Prostate gland (tissue), 2 donors: ENCODE measurements at regions of chr12 and their contacts with region 1.

Region 1: GRCh38 chr12:108618079-108618952 is 15.4 kb downstream of the SELPLG start:
- DNase-seq: peak; percentile 57
- H3K4me3 ChIP-seq: no peak overlapping the region
- H3K27ac ChIP-seq: no peak overlapping the region
- H3K4me1 ChIP-seq: no peaks in the 10 kb centered on the region
- H3K27me3 ChIP-seq: no peaks in the 10 kb centered on the region
- CTCF ChIP-seq: peak; percentile 90 to 97 (median 91)
- POLR2A ChIP-seq: no peak

Region 2: DNA sequence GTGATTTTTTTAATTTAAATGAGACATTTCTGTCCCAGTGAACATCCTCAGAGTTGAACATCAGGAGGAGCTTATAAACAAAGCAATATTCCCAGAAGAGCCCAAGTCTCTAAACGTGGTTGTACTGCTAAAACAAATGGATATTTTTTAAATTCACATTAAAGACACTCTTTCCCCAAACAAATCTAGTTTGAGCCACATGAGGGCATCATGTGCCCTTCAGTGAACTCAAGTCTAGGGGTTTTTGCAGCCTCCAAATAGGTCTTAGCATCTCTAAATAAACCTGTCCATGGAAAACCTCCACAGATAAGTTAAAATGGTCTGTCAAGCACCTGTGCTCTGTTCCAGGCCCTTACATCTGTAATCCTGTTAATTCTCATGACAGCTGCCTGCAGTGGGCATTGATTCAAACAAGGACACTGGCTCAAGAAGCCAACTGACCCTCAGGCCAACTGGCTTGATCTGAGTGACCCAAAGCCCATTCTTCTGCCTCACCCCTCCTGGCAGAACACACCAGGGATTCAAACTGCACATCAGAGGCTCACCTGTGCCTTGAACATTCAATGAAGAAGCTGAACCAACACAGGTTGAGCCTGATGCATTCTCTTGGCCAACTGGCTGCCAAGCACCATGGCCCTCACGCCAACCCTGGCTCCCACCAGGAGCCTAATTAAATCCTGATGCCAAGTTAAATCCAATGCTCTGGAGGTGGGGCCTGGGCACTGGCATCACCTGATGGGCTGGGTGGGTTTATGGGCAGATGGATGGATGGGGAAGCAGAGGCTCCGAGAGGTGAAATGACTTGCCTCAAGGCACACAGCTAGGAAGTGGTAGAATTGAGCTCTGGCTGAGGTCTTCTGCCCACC is 47.3 kb before region 1 on chr12:
- intact Hi-C with region 1: loop called (anchors 2 kb)
- DNase-seq: no peak
- H3K4me3 ChIP-seq: no peak overlapping the region
- H3K27ac ChIP-seq: no peak overlapping the region
- H3K4me1 ChIP-seq: no peaks in the 10 kb centered on the region
- H3K27me3 ChIP-seq: no peaks in the 10 kb centered on the region
- CTCF ChIP-seq: peak in 2 of 4 experiments; percentile 24 to 35
- POLR2A ChIP-seq: no peak

Region 3: DNA sequence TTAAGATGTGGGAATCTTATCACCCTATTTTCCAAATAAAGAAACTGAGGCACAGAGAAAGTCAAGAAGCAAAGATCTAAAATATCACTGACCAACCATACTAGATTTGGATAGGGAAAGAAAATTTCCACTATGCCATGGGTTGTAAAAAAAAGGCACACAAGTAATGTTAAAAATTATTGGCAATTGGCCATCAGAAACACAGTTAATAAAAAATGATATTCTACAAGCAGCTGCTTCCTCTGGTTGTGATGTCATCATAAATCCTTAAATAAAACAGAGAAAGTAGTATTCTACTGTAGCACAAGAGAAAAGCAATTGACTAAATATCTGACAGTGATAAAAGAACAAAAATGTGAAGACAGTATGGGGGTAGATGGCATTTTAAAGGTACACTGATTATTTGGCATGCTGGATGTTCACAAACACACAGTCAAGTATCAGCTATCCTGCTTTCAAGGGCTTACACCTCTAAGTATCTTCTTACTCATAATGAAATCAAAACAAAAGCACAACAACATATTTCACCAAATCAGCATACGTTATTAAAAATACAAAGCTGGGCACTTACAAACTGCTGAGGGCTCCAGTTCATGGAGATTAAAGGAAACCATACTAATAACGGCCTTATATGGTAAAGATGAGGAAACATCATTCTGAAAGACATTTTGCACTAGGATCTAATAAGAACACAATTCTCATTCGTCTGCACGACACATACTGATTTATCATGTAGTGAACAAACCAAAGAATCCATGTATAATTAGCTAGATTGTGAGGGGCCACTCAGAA is 67.3 kb after region 1 on chr12:
- intact Hi-C with region 1: no loop called
- DNase-seq: no peak
- H3K4me3 ChIP-seq: no peak overlapping the region
- H3K27ac ChIP-seq: peak overlapping the region; percentile 14 to 38
- H3K4me1 ChIP-seq: no peaks in the 10 kb centered on the region
- H3K27me3 ChIP-seq: no peaks in the 10 kb centered on the region
- CTCF ChIP-seq: no peak
- POLR2A ChIP-seq: no peak

Region 4: GRCh38 chr12:108731105-108731865 is 113.0 kb after region 1 on chr12 and contains the start of gene CORO1C:
- intact Hi-C with region 1: no loop called
- DNase-seq: peak; percentile 93
- H3K4me3 ChIP-seq: peak within 1 kb of the TSS; percentile 94
- H3K27ac ChIP-seq: peak within 1 kb of the TSS; percentile 90 to 95
- H3K4me1 ChIP-seq: no peaks in the 10 kb centered on the region
- H3K27me3 ChIP-seq: no peaks in the 10 kb centered on the region
- CTCF ChIP-seq: peak; percentile 76 to 97 (median 88)
- POLR2A ChIP-seq: peak; percentile 96
- total RNA-seq, gene CORO1C: 34.9 to 105 TPM